Caco-2 (cell line): ENCODE measurements at regions of chr15 and their contacts with region 1.

Region 1: GRCh38 chr15:46312133-46312740 is 677.4 kb downstream of the SQOR start:
- DNase-seq: peak; percentile 66 to 77
- H3K4me3 ChIP-seq: no peak overlapping the region
- H3K4me3 Mint-ChIP-seq: no peak overlapping the region
- H3K27ac Mint-ChIP-seq: no peak overlapping the region
- H3K4me1 ChIP-seq: no peaks in the 10 kb centered on the region
- H3K4me1 Mint-ChIP-seq: no peaks in the 10 kb centered on the region
- H3K27me3 ChIP-seq: no peaks in the 10 kb centered on the region
- H3K27me3 Mint-ChIP-seq: no peaks in the 10 kb centered on the region
- CTCF ChIP-seq: peak; percentile 81 to 83

Region 2: GRCh38 chr15:46177219-46177618 is 135.0 kb before region 1 on chr15:
- CTCF ChIA-PET with region 1: no interaction called
- POLR2A ChIA-PET with region 1: no interaction called
- intact Hi-C with region 1: no loop called
- DNase-seq: no peak
- H3K4me3 ChIP-seq: no peak overlapping the region
- H3K4me3 Mint-ChIP-seq: no peak overlapping the region
- H3K27ac Mint-ChIP-seq: no peak overlapping the region
- H3K4me1 ChIP-seq: no peaks in the 10 kb centered on the region
- H3K4me1 Mint-ChIP-seq: no peaks in the 10 kb centered on the region
- H3K27me3 ChIP-seq: no peaks in the 10 kb centered on the region
- H3K27me3 Mint-ChIP-seq: no peaks in the 10 kb centered on the region
- CTCF ChIP-seq: no peak

Region 3: DNA sequence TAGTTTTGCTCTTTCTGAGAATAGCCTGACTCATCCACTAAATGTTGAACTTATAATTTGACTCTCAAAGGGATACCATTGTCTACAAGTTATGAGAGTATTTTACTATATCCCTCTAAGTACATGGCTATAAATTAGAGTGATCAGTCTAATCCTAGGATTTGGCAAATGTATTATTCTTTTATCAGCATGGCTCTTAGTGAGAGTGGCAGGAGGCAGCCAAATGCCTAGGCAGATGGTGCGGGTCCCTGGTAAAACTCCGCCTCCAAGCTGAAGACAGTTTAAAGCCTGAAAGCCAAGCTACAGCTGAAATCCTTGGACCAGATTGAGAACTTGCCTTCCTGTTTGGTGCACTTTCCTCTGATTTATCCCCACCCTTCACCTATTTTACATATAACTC is 45.6 kb before region 1 on chr15:
- CTCF ChIA-PET with region 1: no interaction called
- POLR2A ChIA-PET with region 1: no interaction called
- intact Hi-C with region 1: no loop called
- DNase-seq: no peak
- H3K4me3 ChIP-seq: no peak overlapping the region
- H3K4me3 Mint-ChIP-seq: no peak overlapping the region
- H3K27ac Mint-ChIP-seq: no peak overlapping the region
- H3K4me1 ChIP-seq: peaks cover 14% of the 10 kb centered on the region
- H3K4me1 Mint-ChIP-seq: peaks cover 8% of the 10 kb centered on the region
- H3K27me3 ChIP-seq: no peaks in the 10 kb centered on the region
- H3K27me3 Mint-ChIP-seq: no peaks in the 10 kb centered on the region
- CTCF ChIP-seq: no peak

Region 4: DNA sequence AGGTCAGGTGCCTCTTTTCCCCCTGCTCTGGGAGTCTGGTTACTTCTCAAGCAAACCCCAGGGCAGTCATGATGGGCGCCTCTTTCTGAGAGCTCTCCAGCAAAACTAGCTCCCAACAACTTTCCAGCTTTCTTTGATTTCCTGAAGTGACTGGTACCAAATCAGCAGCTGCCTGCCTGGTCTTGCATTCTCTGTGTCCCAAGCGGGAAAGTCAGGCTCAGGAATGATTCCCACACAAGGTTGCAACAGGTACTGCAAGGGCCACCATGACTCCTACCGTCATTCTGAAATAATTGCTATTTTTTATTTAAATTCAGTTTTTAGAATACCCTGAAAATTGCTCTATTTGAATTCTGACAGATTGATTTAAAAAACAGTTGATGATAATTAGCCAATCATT is 18.7 kb before region 1 on chr15:
- CTCF ChIA-PET with region 1: no interaction called
- POLR2A ChIA-PET with region 1: no interaction called
- intact Hi-C with region 1: no loop called
- DNase-seq: no peak
- H3K4me3 ChIP-seq: no peak overlapping the region
- H3K4me3 Mint-ChIP-seq: no peak overlapping the region
- H3K27ac Mint-ChIP-seq: no peak overlapping the region
- H3K4me1 ChIP-seq: no peaks in the 10 kb centered on the region
- H3K4me1 Mint-ChIP-seq: no peaks in the 10 kb centered on the region
- H3K27me3 ChIP-seq: no peaks in the 10 kb centered on the region
- H3K27me3 Mint-ChIP-seq: no peaks in the 10 kb centered on the region
- CTCF ChIP-seq: no peak

Region 5: DNA sequence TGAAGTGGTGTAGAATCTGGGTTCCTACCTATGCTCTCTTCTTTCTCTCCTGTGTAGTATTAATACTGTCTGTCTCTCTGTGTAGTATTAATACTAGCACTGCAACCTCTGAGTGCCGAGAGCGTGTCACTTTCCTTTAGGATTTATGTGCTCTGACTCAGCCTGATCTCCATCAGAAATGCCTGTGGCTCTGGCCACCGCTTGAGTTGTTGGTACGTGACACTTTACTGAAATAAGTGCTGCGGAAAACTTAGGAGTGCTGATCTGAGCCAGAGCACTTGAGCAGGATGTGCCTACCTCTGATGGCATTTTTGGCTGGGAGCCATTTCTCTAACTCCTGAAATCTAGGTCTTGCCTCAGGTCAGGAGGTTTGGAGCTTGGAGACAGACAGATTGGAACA is 129.9 kb after region 1 on chr15:
- CTCF ChIA-PET with region 1: no interaction called
- POLR2A ChIA-PET with region 1: no interaction called
- intact Hi-C with region 1: no loop called
- DNase-seq: no peak
- H3K4me3 ChIP-seq: no peak overlapping the region
- H3K4me3 Mint-ChIP-seq: no peak overlapping the region
- H3K27ac Mint-ChIP-seq: no peak overlapping the region
- H3K4me1 ChIP-seq: no peaks in the 10 kb centered on the region
- H3K4me1 Mint-ChIP-seq: no peaks in the 10 kb centered on the region
- H3K27me3 ChIP-seq: no peaks in the 10 kb centered on the region
- H3K27me3 Mint-ChIP-seq: no peaks in the 10 kb centered on the region
- CTCF ChIP-seq: no peak

Region 6: DNA sequence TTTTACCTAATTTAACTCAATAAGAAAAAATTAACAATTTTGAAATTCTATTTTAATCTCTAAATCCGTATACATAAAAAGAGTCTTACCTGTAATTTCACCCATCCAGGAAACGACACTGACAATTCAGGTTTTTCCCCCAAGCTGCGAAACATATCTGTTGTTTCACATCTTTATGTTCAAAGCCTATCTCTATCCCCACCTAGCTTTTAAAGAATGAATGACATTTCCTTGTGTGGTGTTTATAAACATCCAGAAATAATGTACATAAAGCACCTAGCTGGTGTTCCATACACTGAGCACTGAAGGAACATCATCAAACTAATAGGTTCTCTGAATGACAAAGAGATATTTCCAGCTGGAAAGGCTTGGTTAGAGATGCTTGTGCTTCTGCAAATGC is 190.4 kb after region 1 on chr15:
- CTCF ChIA-PET with region 1: interaction called, 5 read pairs
- POLR2A ChIA-PET with region 1: no interaction called
- intact Hi-C with region 1: loop called (anchors 1 kb)
- DNase-seq: peak in 1 of 2 experiments; percentile 2
- H3K4me3 ChIP-seq: no peak overlapping the region
- H3K4me3 Mint-ChIP-seq: no peak overlapping the region
- H3K27ac Mint-ChIP-seq: no peak overlapping the region
- H3K4me1 ChIP-seq: no peaks in the 10 kb centered on the region
- H3K4me1 Mint-ChIP-seq: no peaks in the 10 kb centered on the region
- H3K27me3 ChIP-seq: no peaks in the 10 kb centered on the region
- H3K27me3 Mint-ChIP-seq: no peaks in the 10 kb centered on the region
- CTCF ChIP-seq: peak in 1 of 2 experiments; percentile 11

Region 7: GRCh38 chr15:46654993-46655392 is 342.8 kb after region 1 on chr15:
- CTCF ChIA-PET with region 1: no interaction called
- POLR2A ChIA-PET with region 1: no interaction called
- intact Hi-C with region 1: loop called (anchors 10 kb)
- DNase-seq: no peak
- H3K4me3 ChIP-seq: no peak overlapping the region
- H3K4me3 Mint-ChIP-seq: no peak overlapping the region
- H3K27ac Mint-ChIP-seq: no peak overlapping the region
- H3K4me1 ChIP-seq: no peaks in the 10 kb centered on the region
- H3K4me1 Mint-ChIP-seq: no peaks in the 10 kb centered on the region
- H3K27me3 ChIP-seq: no peaks in the 10 kb centered on the region
- H3K27me3 Mint-ChIP-seq: peaks cover 2% of the 10 kb centered on the region
- CTCF ChIP-seq: no peak

Region 8: DNA sequence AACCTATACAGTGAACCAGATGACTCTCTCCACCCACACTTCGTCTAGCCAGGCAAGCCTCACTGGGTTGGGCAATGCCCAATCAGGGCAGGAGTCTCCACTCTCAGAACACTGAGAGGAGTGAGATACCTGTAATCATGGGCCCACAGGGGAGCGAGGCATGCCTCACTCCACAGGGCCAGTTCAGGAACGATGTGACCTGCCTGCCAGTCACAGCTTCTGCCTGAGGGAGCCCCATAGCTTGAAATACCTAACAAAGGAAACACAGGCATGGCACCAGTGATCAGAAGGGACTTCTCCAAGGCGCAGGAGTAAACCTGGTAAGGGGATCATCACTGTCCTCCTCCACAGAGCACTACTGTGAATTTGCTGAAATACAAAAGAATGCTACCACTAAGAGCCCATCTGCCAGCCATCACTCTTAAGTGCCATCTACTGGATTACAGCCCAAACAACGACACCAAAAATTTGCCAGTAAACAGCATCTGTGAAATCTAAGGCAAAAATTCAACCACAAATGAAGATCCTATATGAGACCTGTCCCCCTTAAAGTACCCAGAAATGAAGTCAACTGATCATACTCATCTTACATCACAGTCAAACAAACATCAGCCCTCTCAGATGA is 715.2 kb after region 1 on chr15:
- CTCF ChIA-PET with region 1: no interaction called
- POLR2A ChIA-PET with region 1: no interaction called
- intact Hi-C with region 1: loop called (anchors 1 kb)
- DNase-seq: peak in 1 of 2 experiments; percentile 8
- H3K4me3 ChIP-seq: no peak overlapping the region
- H3K4me3 Mint-ChIP-seq: no peak overlapping the region
- H3K27ac Mint-ChIP-seq: no peak overlapping the region
- H3K4me1 ChIP-seq: peaks cover 8% of the 10 kb centered on the region; the same call in 1 of the 2 replicates
- H3K4me1 Mint-ChIP-seq: no peaks in the 10 kb centered on the region
- H3K27me3 ChIP-seq: no peaks in the 10 kb centered on the region
- H3K27me3 Mint-ChIP-seq: no peaks in the 10 kb centered on the region
- CTCF ChIP-seq: peak in 1 of 2 experiments; percentile 10